AG04449 (cell line): ENCODE measurements at regions of chr12 and their contacts with region 1.

Region 1: GRCh38 chr12:27434673-27435565 is 11.6 kb upstream of the SMCO2 start:
- DNase-seq: no peak
- H3K4me3 ChIP-seq: no peak overlapping the region
- CTCF ChIP-seq: peak; percentile 23

Region 2: DNA sequence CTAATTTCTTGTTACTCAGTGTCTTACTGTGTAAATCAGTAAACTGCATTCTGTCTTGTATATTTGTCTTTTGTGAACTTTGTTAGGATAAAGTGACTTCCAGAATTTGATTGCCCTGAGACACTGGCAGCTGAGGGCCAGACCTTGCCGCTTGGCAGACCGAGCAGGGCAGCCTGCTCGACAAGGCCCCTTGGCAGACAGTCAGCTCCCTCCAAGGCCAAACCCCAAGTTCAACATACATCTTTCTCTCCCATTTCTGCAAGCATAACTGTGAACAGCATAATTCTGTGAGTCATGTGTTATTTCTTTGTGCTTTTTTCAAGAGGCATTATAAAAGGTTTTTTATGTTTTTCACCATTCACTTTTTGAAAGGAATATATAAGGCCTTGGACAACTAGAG is 141.5 kb before region 1 on chr12:
- CTCF ChIA-PET with region 1: no interaction called
- POLR2A ChIA-PET with region 1: no interaction called
- DNase-seq: no peak
- H3K4me3 ChIP-seq: no peak overlapping the region
- CTCF ChIP-seq: no peak

Region 3: DNA sequence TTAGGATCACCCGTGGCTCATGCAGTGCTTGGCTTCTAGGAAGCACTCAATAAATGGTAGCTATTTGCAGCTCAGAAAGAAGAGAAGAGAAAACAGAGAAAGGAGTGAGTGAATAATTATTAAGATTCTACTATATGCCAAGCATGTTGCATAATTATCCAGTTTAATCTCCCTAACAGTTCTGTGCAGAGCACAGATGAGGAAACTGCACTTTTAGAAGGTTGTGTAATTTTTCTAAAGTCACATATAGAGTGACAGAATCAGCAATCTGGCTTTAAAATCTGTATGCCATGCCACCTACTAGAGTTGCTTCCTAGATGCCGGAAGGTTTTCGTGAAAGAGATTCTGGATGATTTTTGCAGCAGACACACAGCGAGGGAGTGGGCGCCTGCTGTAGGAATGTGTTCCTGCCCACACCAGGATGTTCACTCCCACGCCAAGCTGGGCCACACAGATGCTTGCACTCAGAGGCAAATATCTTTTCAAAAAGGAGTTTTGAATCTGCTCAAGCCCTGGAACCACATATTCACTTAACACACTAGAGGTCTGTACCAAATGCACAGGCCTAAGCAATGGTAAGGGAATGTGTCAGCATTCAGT is 38.6 kb before region 1 on chr12:
- CTCF ChIA-PET with region 1: no interaction called
- POLR2A ChIA-PET with region 1: no interaction called
- DNase-seq: no peak
- H3K4me3 ChIP-seq: no peak overlapping the region
- CTCF ChIP-seq: no peak

Region 4: DNA sequence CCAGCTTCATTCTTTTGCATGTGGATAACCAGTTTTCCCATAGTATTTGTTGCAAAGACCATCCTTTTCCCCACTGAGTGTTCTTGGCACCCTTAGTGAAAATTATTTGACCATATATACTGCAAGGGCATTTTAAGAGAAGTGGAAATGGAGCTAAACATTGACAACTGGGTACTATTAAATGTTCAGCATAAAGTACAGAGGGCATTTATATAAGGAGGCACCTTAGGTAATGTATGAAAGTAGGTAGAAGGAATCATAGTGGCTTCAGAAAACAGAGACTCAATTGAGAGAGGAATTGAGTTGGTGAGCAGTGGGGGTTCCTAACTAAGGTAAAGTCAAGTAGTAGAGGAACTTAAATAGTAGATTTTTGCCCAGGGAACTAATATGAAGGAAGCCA is 22.9 kb before region 1 on chr12:
- CTCF ChIA-PET with region 1: interaction called, 26 read pairs
- POLR2A ChIA-PET with region 1: no interaction called
- DNase-seq: no peak
- H3K4me3 ChIP-seq: no peak overlapping the region
- CTCF ChIP-seq: no peak

Region 5: DNA sequence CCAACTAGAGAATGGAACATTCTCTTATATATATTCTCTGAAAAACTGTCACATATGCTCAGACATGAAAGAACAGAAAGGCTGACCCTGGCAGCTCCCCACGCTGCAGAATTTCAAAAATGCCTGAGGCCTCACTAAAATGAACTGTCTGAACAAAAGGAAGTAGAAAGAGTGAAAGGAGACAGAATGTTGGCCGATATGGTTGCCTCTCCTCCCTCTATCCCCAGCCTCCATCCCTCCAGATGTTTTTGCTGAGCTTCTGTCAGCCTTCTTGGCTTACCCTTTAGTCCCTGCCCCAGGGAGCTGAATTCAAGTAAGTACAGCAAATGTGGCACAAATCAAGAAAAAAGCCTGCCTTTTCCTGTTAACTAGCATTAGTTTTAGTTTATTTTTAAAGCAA is 18.5 kb after region 1 on chr12:
- CTCF ChIA-PET with region 1: interaction called, 59 read pairs
- POLR2A ChIA-PET with region 1: no interaction called
- DNase-seq: no peak
- H3K4me3 ChIP-seq: no peak overlapping the region
- CTCF ChIP-seq: no peak

Region 6: DNA sequence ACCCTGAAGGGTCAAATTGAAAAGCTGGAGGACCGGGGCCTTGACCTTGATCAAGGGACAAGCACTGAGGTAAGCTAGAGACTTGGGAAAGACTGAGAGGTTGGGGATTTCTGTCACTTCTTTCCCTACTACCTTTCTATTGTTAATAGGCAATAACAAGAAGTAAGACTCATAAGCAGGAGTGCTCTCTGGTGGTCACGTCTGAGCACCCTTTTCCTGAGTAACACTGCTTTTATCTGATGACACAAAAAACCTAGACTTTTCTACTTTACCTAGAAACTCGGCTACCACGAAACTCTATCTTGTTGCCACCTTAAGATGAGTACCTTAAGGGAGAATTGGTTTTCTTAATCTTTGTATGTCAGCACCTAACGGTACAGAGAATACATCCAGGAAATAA is 53.6 kb after region 1 on chr12:
- CTCF ChIA-PET with region 1: interaction called, 23 read pairs
- POLR2A ChIA-PET with region 1: no interaction called
- DNase-seq: no peak
- H3K4me3 ChIP-seq: no peak overlapping the region
- CTCF ChIP-seq: no peak

Region 7: GRCh38 chr12:27523642-27524493 is 88.9 kb after region 1 on chr12 and contains the start of gene PPFIBP1:
- CTCF ChIA-PET with region 1: interaction called, 16 read pairs
- POLR2A ChIA-PET with region 1: interaction called, 10 read pairs
- DNase-seq: peak; percentile 81
- H3K4me3 ChIP-seq: peak within 1 kb of the TSS; percentile 78
- CTCF ChIP-seq: peak; percentile 48

Region 8: GRCh38 chr12:27635349-27635972 is 200.5 kb after region 1 on chr12:
- CTCF ChIA-PET with region 1: interaction called, 35 read pairs
- POLR2A ChIA-PET with region 1: no interaction called
- DNase-seq: no peak
- H3K4me3 ChIP-seq: no peak overlapping the region
- CTCF ChIP-seq: peak; percentile 47

Region 9: GRCh38 chr12:27652174-27652763 is 217.3 kb after region 1 on chr12:
- CTCF ChIA-PET with region 1: interaction called, 59 read pairs
- POLR2A ChIA-PET with region 1: no interaction called
- DNase-seq: peak; percentile 41
- H3K4me3 ChIP-seq: no peak overlapping the region
- CTCF ChIP-seq: peak; percentile 74

Region 10: DNA sequence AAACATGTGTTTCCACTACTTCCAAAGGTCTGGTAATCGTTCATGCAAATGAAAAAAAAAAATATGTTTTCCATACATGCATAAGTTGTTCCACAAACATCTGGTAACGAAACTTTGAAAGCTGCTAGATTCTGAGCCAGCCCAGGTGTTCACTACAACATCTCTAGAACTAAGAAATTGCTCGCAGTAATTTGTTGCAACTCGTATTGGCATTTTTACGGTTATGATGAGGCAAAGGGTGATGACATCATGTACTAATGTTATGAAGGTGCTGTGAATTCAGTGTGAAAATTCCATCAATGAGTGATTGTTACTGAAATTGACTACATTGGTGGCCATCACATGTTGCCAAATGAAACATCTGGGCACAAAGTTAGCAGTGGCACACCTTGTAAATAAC is 723.4 kb after region 1 on chr12:
- CTCF ChIA-PET with region 1: no interaction called
- POLR2A ChIA-PET with region 1: no interaction called
- DNase-seq: no peak
- H3K4me3 ChIP-seq: no peak overlapping the region
- CTCF ChIP-seq: no peak